Sigmoid colon (tissue), 7 donors: ENCODE measurements at regions of chr7 and their contacts with region 1.

Region 1: DNA sequence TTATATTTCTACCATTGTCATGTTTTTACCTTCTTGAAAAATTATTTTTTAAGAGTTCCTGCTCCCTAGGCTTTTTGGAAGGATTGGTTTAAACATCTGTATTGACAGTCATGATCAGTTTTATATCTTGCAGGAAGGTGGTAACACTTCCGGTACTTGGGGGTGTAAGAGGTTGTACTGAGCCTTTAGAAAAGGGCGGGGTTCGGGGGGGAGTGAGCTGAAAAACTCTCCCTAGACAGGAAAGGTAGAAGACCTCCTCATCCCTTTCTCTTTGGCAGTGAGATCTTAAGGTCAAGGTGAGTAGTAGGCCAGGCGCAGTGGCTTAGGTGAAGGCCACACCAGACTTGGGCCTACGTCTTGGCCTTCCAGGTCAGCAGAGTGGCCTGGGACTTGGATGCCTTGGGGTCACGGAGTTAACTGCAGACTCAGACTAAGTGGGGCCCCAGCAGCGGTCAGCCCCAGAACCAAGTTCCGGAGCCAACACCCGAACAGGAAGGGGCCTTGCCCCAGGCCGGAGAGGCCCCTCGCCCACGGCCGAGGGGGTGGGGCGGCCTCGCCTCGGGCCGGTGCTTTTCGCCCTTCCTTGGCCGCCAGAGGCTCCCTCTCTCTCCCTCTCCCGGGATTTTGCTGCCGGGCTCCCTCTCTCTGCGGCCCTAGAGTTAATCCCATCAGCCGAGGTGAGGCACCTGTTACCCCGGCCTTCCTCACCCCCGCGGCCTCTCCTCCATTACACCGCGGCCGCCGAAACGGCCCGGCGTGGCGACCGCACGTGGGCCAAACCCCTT is at the start of gene PPP1R9A:
- DNase-seq: peak; percentile 66
- H3K4me3 ChIP-seq: peak within 1 kb of the TSS; percentile 47 to 76 (median 67)
- H3K27ac ChIP-seq: peak within 1 kb of the TSS; percentile 79 to 90 (median 84)
- H3K4me1 ChIP-seq: peaks cover 0 to 35% (median 12%) of the 10 kb centered on the region in 4 donors
- H3K27me3 ChIP-seq: no peaks in the 10 kb centered on the region
- CTCF ChIP-seq: peak in 3 of 4 experiments; percentile 27 to 43 (median 35)
- EP300 ChIP-seq: no peak
- POLR2A ChIP-seq: no peak
- total RNA-seq, gene PPP1R9A: 43.5 to 51.3 (median 46.1) TPM

Region 2: DNA sequence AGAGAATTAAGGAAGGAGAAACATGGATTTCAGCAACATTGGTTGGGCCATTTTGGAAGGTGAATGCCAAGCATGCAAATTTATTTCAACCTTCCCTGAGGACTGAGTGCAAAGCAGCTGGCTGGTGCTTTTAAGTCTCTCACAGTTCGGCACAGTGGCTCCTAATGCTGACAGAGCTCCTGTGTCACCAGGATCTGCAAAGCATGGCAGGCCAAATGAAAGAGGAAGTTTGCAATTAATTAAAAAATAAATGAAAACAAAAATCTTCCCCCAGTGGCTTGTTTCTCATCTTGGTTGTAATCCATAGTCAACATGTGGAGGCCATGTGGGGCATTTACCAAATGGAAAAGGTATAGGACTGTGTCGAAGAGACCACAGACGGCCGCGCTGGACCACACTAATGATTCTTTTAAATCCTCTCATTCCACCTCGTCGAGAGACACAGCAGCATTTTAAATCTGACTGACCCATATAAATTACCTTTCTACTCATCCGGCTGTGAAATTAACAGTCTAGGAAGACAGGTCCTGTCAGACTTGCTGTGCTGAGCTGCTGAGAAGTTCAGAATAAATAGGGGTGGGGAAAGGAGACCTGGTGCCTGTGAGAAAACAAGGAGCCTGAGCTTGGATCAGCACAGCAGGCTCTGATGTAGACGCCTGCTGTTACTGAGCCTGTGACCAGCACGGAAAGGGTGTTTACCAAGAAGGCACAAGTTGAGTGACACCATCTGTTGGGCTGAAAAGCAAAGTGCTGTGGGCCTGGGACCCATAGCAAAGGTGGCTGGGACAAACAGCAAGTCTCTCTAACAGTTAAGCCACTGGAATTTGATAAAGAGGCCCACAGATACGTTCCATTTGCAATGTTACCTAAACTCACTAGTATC is 648.6 kb before region 1 on chr7:
- intact Hi-C with region 1: no loop called
- DNase-seq: no peak
- H3K4me3 ChIP-seq: no peak overlapping the region
- H3K27ac ChIP-seq: no peak overlapping the region
- H3K4me1 ChIP-seq: no peaks in the 10 kb centered on the region
- H3K27me3 ChIP-seq: no peaks in the 10 kb centered on the region
- CTCF ChIP-seq: no peak
- EP300 ChIP-seq: no peak
- POLR2A ChIP-seq: no peak

Region 3: GRCh38 chr7:94295850-94296249 is 611.4 kb before region 1 on chr7:
- intact Hi-C with region 1: loop called (anchors 10 kb)
- DNase-seq: no peak
- H3K4me3 ChIP-seq: peak overlapping the region in 3 of 4 donors; percentile 22 to 40 (median 32)
- H3K27ac ChIP-seq: peak overlapping the region; percentile 78 to 93 (median 88)
- H3K4me1 ChIP-seq: peaks cover 0 to 54% (median 32%) of the 10 kb centered on the region in 4 donors
- H3K27me3 ChIP-seq: no peaks in the 10 kb centered on the region
- CTCF ChIP-seq: peak; percentile 56 to 82 (median 68)
- EP300 ChIP-seq: peak in 1 of 4 donors; percentile 15
- POLR2A ChIP-seq: no peak

Region 4: DNA sequence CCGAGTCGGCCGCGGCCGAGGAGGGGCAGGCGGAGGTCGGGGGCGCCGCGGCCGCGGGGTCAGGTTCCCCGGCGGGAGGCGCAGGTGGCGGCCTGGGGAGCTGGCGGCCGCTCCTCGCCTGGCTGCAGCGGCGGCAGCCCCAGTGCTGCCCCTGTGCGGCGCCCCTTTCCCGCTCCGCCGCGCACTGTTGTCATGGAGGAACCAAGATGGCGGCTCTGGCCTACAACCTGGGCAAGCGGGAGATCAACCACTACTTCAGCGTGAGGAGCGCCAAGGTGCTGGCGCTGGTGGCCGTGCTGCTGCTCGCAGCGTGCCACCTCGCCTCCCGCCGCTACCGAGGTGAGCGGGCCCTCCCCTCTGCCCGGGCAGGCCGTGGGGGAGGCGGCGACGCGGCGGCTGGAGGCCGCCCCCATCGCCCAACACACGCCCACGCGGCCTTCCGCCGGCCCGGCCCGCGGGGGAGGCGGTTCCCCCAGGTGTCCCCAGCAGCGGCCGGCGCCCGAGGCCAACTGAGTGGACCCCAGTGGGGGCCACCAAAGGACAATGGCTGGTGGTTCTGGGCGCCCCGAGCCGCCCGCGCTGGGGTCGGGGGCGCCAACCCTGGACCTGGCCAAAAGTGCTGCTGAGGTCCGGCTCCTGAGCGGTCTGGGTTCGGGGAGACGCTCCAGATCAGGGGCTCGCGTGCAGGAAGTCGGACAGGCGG is 397.2 kb before region 1 on chr7:
- intact Hi-C with region 1: loop called (anchors 10 kb)
- DNase-seq: peak; percentile 77
- H3K4me3 ChIP-seq: peak overlapping the region; percentile 75 to 96 (median 82)
- H3K27ac ChIP-seq: peak overlapping the region; percentile 89 to 93 (median 91)
- H3K4me1 ChIP-seq: peaks cover 0 to 38% (median 21%) of the 10 kb centered on the region in 4 donors
- H3K27me3 ChIP-seq: no peaks in the 10 kb centered on the region
- CTCF ChIP-seq: no peak
- EP300 ChIP-seq: no peak
- POLR2A ChIP-seq: peak in 1 of 2 donors; percentile 18

Region 5: GRCh38 chr7:94975336-94975735 is 68.1 kb after region 1 on chr7:
- intact Hi-C with region 1: loop called (anchors 5 kb)
- DNase-seq: no peak
- H3K4me3 ChIP-seq: no peak overlapping the region
- H3K27ac ChIP-seq: peak overlapping the region in 3 of 4 donors; percentile 16 to 50 (median 34)
- H3K4me1 ChIP-seq: peaks cover 0 to 62% (median 39%) of the 10 kb centered on the region in 4 donors
- H3K27me3 ChIP-seq: no peaks in the 10 kb centered on the region
- CTCF ChIP-seq: no peak
- EP300 ChIP-seq: no peak
- POLR2A ChIP-seq: no peak

Region 6: DNA sequence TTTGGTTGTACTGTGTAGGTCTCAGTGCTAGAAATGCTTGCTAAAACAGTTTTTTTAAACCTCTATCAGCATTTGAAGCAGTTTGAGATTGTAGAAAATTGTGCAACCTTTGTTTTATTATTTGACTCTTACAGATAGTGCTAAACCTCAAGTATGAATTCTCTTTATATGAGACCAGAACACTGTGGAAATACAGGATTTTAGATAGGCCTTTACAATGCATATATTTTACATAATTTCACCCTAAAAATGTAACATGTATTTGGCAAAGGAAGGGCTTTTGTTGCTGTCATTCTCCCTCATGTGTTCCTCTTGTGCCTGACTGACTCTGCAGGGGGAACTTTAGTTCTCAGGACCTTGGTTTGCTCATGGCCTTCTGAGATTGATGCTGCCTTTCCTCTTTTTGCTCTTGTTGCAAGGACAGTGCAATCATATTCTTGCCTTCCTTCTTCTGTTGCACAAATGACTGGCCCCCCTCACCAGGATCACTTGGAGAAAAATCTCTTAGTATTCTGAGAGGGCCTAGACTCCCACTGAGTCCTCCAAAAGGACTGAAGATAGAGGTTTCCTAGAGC is 188.8 kb after region 1 on chr7:
- intact Hi-C with region 1: loop called (anchors 10 kb)
- DNase-seq: no peak
- H3K4me3 ChIP-seq: no peak overlapping the region
- H3K27ac ChIP-seq: no peak overlapping the region
- H3K4me1 ChIP-seq: peaks cover 0 to 45% (median 19%) of the 10 kb centered on the region in 4 donors
- H3K27me3 ChIP-seq: no peaks in the 10 kb centered on the region
- CTCF ChIP-seq: no peak
- EP300 ChIP-seq: no peak
- POLR2A ChIP-seq: no peak

Region 7: DNA sequence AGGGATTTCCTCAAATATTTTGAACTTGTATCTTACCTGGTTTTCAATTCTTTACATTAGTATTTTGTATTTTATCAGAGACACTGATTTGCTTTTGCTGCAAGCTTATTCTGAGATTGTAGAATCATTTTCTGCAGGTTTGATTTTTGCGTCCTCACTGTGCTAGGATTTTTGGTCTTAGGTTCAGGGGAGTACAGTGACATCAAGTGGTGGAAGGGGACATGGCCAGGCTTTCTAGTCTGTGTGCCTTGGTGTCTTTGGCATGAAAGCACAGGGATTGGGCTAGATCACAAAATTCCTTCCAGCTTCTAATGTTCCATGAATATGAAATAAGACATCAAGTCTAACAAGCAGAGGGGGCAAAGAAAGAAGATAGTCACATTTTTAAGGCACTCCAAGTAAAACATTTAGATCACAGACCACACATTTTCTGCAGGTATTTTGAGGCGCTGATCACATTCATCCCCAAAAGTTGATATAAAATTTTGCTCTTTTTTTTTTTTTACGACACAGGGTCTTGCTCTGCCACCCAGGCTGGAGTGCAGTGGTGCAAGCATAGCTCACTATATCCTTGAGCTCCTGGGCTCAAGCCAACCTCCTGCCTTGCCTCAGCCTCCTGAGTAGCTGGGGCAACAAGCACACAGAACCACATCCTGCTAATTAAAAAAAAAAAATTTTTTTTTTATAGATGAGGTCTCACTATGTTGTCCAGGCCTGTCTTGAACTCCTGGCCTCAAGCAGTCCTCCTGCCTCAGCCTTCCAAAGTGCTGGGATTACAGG is 292.8 kb after region 1 on chr7:
- intact Hi-C with region 1: loop called (anchors 5 kb)
- DNase-seq: peak; percentile 64
- H3K4me3 ChIP-seq: no peak overlapping the region
- H3K27ac ChIP-seq: no peak overlapping the region
- H3K4me1 ChIP-seq: no peaks in the 10 kb centered on the region
- H3K27me3 ChIP-seq: no peaks in the 10 kb centered on the region
- CTCF ChIP-seq: peak; percentile 48 to 66 (median 62)
- EP300 ChIP-seq: no peak
- POLR2A ChIP-seq: no peak